Activated CD4-positive, alpha-beta T cell treated with anti-CD3 and anti-CD28 coated beads, Interleukin-2, amount 10 ng/mL, durations not matched to agents 24 days and 14 days (primary cell): ENCODE measurements at regions of chr6 and their contacts with region 1.

Region 1: GRCh38 chr6:2999618-3000557 is at the start of gene NQO2:
- DNase-seq: peak; percentile 97
- H3K4me3 Mint-ChIP-seq: peak within 1 kb of the TSS; percentile 92
- H3K27ac Mint-ChIP-seq: peak within 1 kb of the TSS; percentile 88
- H3K4me1 Mint-ChIP-seq: peaks cover 30% of the 10 kb centered on the region
- H3K27me3 Mint-ChIP-seq: peaks cover 3% of the 10 kb centered on the region
- total RNA-seq, gene NQO2: 29.1 and 34.0 TPM in 2 replicates

Region 2: DNA sequence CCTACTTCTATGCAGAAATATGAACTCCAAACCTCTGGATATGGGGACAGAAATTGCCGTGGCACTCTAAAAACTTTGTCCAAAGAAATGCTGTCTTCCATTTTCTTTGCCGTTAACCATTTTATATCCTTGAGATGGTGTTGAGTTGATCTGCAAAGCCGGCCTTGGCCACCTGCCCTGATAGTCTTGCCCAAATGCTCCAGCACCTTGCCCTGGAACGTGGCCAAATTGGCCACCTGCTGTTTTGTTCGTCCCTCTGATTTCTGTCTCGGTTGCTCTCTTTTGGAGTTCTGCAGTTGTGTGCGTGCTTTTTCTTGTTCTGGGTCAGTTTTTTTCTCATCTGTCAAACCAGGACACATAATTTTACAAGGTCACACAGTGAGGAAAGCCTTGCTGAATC is 514.8 kb before region 1 on chr6:
- intact Hi-C with region 1: no loop called
- DNase-seq: no peak
- H3K4me3 Mint-ChIP-seq: no peak overlapping the region
- H3K27ac Mint-ChIP-seq: no peak overlapping the region
- H3K4me1 Mint-ChIP-seq: no peaks in the 10 kb centered on the region
- H3K27me3 Mint-ChIP-seq: peaks cover 15% of the 10 kb centered on the region

Region 3: DNA sequence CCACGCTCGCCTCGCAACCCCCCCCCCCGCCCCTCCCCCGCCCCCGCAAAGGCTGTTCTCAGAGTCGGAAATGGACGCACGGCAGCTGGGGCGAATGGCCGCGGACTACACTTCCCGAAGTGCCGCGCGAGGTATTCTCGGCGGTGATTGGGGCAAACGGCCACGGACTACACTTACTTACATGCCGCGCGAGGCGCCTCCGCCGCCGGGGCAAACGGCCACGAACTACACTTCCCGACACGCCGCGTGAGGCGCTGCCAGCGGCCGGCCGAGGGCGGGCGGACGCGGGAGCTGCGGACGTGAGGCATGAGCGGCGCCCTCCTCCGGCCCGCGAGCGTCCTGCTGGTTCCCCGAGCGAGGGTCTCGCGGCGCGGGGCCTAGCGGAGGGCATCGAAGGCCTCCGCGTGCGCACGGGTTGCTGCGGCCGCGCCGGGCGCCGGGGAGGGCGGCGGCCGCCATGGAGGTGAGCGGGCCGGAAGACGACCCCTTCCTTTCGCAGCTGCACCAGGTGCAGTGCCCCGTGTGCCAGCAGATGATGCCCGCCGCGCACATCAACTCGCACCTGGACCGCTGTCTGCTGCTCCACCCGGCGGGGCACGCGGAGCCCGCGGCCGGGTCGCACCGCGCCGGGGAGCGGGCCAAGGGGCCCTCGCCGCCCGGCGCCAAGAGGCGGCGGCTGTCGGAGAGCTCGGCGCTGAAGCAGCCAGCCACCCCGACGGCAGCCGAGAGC is 234.6 kb before region 1 on chr6 and contains the start of gene WRNIP1:
- intact Hi-C with region 1: loop called (anchors 1 kb)
- DNase-seq: peak; percentile 99
- H3K4me3 Mint-ChIP-seq: peak within 1 kb of the TSS; percentile 88
- H3K27ac Mint-ChIP-seq: peak within 1 kb of the TSS; percentile 95
- H3K4me1 Mint-ChIP-seq: peaks cover 45% of the 10 kb centered on the region
- H3K27me3 Mint-ChIP-seq: no peaks in the 10 kb centered on the region
- total RNA-seq, gene WRNIP1: 49.3 and 50.5 TPM in 2 replicates

Region 4: DNA sequence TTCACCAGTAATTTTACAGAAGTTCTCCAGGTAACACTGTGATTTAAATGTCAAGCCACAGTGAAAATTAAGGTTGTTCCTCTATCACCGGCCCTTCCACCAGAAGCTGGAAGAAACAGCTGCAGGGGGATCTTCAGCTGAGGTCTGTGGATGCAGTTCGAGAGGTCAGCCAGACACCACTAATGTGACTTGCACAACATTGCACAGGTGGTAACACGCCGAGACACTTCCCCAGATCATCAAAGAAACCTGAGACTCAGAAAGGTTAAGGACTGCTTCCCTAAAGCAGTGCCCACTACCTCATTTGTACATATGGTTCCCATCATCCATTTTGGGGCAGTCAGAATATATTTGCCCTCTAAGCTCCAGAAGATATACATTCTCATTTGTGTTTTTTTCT is 88.7 kb before region 1 on chr6:
- intact Hi-C with region 1: no loop called
- DNase-seq: peak; percentile 52
- H3K4me3 Mint-ChIP-seq: no peak overlapping the region
- H3K27ac Mint-ChIP-seq: no peak overlapping the region
- H3K4me1 Mint-ChIP-seq: peaks cover 35% of the 10 kb centered on the region
- H3K27me3 Mint-ChIP-seq: peaks cover 1% of the 10 kb centered on the region

Region 5: DNA sequence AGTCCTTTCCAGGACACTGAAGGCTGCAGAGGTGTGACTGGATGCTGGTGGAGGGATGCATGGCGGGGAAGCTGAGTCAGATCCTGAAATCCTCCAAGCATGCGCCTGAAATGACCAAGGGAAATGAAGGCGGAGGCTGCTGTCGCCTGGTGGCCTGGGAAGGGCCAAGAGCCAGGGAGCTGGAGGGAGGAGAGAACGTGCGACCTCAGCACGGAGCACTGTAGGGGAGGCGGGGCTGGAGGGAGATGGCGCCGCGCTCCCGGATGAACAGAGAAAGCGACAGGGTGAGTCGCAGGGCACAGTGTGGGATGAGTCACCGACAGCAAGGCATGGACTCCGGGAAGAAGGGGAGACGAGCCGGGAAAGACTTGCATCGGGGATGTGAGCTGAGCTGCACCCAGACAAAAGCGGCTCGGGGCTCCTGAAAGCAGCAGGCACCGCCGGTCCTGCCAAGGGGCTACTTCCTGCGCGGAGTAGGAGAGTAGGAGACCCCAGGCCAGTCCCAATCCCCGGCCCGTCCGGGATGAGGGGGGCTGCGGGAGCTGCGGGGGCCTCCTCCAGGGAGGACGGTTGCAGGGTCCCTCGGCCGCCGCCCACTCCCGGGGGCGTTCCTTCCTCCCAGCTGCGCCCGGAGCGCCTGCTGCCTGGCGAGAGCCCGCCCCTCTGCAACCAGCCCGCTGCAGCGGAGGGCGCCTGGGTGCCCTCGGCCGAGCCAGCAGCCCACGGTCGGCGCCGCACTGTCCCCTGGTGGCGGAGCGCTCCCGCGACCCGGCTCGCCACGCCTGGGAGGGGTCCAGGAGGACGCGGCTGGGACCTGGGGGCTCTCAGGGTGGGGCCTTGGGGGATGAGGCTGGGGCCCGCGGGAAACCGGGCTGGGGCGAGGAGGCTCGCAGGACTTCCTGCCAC is 11.2 kb before region 1 on chr6:
- intact Hi-C with region 1: loop called (anchors 1 kb)
- DNase-seq: peak; percentile 93
- H3K4me3 Mint-ChIP-seq: peak overlapping the region; percentile 89
- H3K27ac Mint-ChIP-seq: peak overlapping the region; percentile 99
- H3K4me1 Mint-ChIP-seq: peaks cover 22% of the 10 kb centered on the region
- H3K27me3 Mint-ChIP-seq: peaks cover 3% of the 10 kb centered on the region

Region 6: DNA sequence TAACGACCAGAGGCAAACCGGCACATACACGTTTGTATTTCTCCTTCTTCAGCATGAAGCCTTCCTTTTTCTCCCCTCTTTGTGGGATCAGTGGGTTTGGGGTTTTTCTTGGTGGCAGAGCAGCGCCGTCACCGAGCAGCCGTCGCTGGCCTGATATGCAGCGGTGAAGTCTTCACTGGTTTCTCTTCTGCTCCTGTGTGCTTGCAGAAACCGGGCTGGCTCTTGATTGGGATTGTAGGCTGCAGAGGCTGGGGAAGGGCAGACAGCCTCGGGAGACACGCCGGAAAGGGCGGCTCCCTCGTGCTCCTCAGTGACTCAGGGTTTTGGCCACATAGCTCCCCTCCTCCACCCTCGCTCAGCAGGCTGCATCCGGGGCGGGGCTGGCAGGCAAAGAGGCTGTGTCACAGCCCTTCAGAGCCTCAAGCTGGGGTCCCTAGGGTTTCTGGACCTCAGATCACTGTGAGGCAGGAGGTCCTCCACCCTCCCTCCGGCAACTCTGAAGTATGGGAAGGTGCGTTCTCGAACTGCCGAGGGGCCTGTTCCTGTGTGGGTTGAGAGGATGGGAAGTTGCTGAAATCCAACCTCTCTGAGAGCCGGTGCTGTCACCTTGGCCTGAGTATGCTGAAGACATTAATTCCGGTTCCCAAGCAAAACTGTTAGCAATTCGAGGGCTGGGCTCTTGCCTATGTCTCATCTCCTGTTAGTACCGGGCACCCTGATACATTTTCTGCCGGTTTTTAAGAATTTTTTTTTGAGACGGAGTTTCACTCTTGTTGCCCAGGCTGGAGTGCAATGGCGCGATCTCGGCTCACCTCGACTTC is 24.0 kb after region 1 on chr6:
- intact Hi-C with region 1: loop called (anchors 1 kb)
- DNase-seq: peak; percentile 96
- H3K4me3 Mint-ChIP-seq: peak overlapping the region; percentile 94
- H3K27ac Mint-ChIP-seq: peak overlapping the region; percentile 97
- H3K4me1 Mint-ChIP-seq: peaks cover 60% of the 10 kb centered on the region
- H3K27me3 Mint-ChIP-seq: no peaks in the 10 kb centered on the region

Region 7: GRCh38 chr6:3039384-3039783 is 39.5 kb after region 1 on chr6:
- intact Hi-C with region 1: no loop called
- DNase-seq: no peak
- H3K4me3 Mint-ChIP-seq: no peak overlapping the region
- H3K27ac Mint-ChIP-seq: no peak overlapping the region
- H3K4me1 Mint-ChIP-seq: no peaks in the 10 kb centered on the region
- H3K27me3 Mint-ChIP-seq: peaks cover 23% of the 10 kb centered on the region

Region 8: DNA sequence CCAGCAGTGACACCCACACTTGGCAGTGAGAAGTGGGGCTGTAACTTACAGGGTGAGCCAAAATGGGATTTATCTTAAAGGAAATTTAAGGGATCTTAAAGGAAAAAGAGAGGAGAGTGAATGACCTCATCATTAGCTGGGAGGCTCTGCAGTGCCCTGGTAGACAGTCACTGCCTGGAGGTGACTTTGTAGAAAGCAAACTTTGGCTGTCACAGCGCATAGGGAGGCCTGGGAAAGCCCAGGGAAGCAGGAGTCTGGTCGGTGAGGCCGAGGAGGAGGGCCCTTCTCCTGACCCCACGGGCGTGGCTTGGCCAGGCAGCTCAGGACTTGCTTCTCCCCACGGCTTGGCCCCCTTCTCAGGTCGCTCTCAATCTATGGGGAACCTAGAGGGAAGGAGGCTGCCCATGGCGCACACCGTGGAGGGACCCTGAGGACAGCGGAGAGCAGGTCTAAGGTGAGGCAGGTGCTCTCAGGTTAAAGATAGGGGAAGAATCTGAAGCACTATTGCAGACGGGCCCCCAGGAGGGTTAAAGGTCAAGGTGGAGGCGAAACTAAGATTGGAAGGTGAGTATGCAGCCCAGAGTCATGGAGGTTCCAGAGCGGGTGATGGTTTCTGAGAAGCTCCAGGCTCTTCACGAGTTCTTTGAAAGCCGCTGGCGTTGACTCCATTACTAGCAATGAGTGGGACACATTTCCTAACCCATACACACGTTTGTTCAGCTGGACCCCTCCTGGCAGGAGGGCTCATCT is 52.8 kb after region 1 on chr6:
- intact Hi-C with region 1: loop called (anchors 1 kb)
- DNase-seq: no peak
- H3K4me3 Mint-ChIP-seq: peak overlapping the region; percentile 82
- H3K27ac Mint-ChIP-seq: peak overlapping the region; percentile 68
- H3K4me1 Mint-ChIP-seq: peaks cover 28% of the 10 kb centered on the region
- H3K27me3 Mint-ChIP-seq: peaks cover 10% of the 10 kb centered on the region

Region 9: DNA sequence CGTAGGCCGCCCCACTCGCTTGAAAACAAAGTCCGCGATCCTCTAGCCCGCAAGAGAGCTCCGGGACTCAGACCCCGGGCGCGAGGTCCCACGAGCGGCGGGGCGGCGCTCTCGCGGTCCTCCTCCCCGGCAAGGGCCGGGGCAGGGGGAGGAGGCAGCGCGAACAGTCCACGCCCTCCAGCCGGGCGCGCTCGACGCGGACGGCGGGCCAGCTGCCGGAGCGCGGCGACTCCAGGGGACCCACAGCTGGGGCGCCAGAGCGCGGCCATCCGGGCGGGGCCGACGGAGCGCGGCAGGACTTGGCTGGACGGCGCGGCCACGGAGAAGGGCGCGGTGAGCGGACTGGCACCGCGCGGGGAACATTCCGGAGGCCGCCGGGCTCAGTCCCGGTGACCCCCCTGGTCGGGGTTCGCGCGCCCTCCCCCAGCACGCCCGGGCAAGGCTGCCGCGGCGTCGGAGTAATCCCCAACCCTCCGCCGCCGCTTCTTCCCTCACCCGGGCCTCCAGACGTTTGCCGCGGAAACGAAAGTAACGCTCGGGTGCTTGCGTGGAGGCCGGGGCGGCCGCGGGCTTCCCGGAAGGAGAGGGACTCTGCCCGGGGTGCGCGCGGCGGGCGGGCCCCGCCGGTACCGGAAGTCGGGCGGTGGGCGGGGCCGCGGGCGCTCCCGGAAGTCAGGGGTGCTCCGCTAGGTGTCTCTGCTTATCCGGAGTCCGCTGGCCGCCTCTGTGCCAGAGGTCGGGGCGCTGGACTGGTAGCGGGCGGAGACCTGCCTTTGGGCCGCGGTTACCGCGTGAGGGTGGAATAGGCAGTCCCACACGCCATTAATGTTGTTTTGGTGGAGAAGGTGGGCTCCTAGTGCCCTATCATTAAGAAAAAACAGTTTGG is 68.7 kb after region 1 on chr6 and contains the start of gene RIPK1:
- intact Hi-C with region 1: loop called (anchors 1 kb)
- DNase-seq: peak; percentile 99
- H3K4me3 Mint-ChIP-seq: peak within 1 kb of the TSS; percentile 98
- H3K27ac Mint-ChIP-seq: peak within 1 kb of the TSS; percentile 97
- H3K4me1 Mint-ChIP-seq: peaks cover 47% of the 10 kb centered on the region
- H3K27me3 Mint-ChIP-seq: no peaks in the 10 kb centered on the region
- total RNA-seq, gene RIPK1: 17.0 and 17.9 TPM in 2 replicates

Region 10: GRCh38 chr6:3118353-3119039 is 118.6 kb after region 1 on chr6 and contains the start of gene BPHL:
- intact Hi-C with region 1: loop called (anchors 1 kb)
- DNase-seq: peak; percentile 100
- H3K4me3 Mint-ChIP-seq: peak within 1 kb of the TSS; percentile 89
- H3K27ac Mint-ChIP-seq: peak within 1 kb of the TSS; percentile 91
- H3K4me1 Mint-ChIP-seq: peaks cover 14% of the 10 kb centered on the region
- H3K27me3 Mint-ChIP-seq: peaks cover 3% of the 10 kb centered on the region
- total RNA-seq, gene BPHL: 6.8 and 7.7 TPM in 2 replicates